Right ventricle myocardium superior (tissue), 1 donor: ENCODE measurements at regions of chr5 and their contacts with region 1.

Region 1: DNA sequence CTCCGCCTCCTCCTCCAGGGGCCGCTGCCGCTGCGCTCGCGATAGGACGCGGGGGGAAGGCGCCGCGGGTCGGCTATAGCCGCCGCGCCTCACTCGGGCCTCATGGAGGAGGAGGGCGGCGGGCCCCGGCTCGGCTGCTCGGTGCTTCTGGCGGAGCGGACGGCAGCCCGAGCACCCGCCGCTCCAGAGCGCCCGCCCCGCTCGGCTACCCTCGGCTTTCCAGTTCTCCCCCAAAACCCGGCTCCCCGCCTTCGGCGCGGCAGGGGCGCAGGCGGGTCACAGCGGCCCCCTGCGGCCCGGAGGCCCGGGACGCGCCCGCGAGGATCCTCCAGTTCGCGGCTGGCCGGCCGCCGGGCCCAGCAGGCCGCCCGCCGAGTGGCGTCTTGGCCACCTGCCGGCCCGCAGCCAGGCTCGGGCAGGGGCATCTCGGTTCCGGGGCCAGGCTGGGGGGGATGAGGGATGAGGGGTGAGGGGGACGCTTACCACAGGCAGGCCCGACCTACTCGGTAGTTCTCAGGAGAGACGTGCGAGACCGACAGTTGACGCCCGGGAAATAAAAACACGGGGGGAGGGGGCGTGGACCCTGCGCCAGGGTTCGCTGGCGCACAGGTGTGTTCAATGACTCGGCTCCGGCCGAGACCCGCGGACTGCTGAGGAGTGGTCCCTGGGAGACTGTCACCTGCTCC is at the start of gene PAIP1:
- DNase-seq: peak; percentile 89
- ATAC-seq: peak; percentile 95
- total RNA-seq, gene PAIP1: 120 TPM

Region 2: DNA sequence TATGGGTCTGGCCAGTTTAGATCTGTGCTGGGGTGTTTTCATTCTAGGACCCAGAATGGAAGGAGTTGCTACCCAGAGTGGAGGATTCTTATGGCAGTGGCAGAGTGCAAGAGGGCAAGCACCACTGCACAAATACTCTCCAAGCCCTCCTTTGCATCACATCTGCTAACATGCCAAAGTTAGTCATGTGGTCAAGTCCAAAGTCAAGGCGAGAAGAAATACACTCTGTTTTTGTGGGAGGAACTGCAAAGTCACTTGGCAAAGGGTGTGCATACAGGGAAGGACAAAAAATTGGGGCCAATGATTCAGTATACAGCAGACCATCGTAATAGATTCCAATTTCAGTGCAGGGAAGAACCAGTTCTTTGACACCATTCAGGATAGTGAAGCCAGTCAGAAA is 199.9 kb before region 1 on chr5:
- intact Hi-C with region 1: no loop called
- DNase-seq: no peak
- ATAC-seq: peak; percentile 43

Region 3: DNA sequence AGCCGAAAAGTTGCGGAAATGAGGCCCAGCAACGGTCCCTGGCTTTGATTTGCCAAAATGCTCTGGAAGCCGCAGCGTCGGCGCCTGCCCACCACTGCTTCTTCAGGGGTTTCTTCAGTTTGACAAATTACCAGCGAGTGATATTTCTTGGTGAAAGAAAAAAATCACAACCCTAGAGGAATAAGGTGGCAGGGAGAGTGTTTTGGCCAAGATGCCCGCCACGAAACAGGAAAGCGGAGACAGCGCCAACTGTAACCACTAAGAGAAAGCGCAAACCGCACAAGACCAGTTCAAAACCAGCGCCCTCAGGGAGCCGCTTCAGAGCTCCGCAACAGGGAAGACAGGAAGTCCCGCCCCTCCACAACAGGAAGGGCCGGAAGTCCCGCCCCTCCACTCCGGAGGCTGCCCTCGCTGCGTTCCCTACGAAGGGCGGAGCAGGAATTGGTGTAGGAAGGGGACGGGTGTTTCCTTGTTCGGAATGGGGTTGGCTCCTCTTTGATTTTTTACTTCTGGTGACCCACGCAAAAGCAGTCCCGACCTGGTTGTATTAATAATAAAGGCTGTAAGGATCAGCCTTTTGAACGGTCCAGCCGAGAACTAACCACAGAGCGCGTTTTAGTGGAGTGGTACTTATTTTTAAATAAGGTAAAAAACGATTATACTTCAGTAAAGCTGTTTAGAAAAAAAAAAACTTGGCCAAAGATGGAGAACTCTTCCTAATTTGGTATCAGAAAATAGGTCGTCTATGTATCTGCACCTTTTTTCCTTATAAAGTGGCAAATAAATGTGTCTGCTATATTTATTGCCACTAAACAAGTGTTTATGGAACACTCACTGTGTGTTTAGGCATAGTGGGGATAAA is 42.0 kb before region 1 on chr5 and contains the start of gene C5orf34:
- intact Hi-C with region 1: no loop called
- DNase-seq: peak; percentile 97
- ATAC-seq: peak; percentile 100
- total RNA-seq, gene C5orf34: 0.40 TPM

Region 4: DNA sequence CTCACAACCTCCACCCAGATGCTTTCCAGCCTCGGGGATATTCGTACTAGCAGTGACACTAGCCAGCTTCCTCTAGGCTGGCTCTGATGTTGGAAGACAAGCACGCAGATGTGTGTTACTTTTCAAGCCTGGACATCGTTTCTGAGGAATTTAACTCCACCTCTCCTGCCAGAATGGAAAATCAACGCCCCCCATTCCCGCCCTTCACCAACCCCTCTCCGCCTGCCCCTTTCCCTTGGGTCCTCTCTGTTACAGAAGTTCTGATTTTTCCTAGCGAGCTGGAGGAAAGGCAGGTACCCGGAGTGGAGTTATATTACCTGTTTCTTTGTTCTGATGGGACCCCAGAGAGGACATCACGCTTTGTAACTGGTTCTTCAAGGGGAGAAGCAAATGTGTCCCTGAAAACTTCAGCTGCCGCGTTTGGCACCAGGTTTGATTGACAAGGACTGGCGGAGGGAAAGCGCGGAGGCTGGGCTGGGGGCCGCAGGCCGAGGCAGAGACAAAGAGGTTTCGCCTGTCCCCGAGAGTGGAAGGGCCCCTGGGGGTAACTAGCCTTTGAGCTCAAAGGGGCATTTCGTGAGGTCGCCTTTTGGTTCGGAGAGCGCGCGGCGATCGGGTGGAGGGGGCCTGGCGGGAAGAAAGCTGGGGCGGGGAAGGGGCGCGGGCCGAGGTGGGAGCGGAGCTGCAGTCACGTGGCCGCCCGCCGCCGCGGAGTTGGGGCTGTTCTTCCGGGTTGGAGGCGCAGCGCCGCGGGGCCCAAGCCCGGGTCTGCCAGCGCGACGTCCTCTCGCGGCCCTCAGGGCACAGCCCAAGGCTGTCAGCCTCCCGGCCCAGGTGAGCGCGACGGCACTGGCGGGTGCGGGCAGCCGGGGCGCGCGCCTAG is 45.7 kb after region 1 on chr5 and contains the start of gene NNT:
- intact Hi-C with region 1: loop called (anchors 5 kb)
- DNase-seq: peak; percentile 90
- ATAC-seq: peak; percentile 88
- total RNA-seq, gene NNT: 573 TPM

Region 5: GRCh38 chr5:43664501-43665040 is 107.6 kb after region 1 on chr5:
- intact Hi-C with region 1: no loop called
- DNase-seq: no peak
- ATAC-seq: peak; percentile 18